ENCODE measurements at regions of chr12 and their contacts with region 1.

Region 1: DNA sequence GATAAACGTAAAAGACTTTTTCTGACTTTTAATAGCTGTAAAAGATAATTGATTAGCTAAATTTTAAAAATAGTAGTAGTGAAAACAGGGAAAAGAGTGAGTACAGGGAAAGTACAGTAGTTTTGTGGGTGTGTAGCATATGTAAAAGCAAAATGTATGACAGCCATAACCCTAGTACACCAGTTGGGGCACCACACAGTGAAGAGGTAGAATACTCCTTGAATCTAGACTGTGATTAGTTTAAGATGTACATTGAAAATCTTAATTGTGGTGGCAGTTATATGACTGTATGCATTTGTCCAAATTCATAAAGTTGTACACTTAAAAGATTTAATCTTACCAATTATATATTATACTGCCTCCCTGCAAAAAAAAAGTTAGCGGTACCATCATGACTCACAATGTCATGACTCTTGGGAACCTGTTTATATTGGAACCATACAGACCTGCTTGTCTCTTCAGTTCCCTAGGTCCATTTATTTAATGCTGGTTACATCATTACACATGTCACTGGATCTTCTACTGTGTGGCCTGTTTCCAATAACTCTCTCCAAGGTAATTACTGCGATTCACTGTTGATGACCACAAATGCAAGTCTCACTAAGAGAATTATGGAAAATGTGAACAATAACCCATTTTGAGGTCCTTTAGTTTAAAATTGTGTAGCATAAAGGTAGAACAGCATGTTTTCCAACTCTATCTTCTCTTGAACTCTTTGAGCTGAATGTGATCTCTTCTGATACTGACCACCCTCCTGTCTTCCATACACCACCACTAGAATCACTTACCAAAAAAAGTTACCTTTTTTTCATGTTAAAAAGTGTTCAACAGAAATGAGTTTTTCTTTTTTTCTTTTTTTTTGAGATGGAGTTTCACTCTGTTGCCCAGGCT is 264.2 kb upstream of the AMIGO2 start:
- DNase-seq: no peak
- H3K4me3 ChIP-seq: no peak overlapping the region
- H3K27ac ChIP-seq: no peak overlapping the region
- H3K4me1 ChIP-seq: no peaks in the 10 kb centered on the region
- H3K27me3 ChIP-seq: no peaks in the 10 kb centered on the region
- CTCF ChIP-seq: no peak
- EP300 ChIP-seq: no peak
- POLR2A ChIP-seq: no peak

Region 2: GRCh38 chr12:47328831-47329545 is 14.9 kb before region 1 on chr12:
- in situ Hi-C with region 1: no loop called
- intact Hi-C with region 1: loop called (anchors 1 kb)
- DNase-seq: no peak
- H3K4me3 ChIP-seq: no peak overlapping the region
- H3K27ac ChIP-seq: no peak overlapping the region
- H3K4me1 ChIP-seq: no peaks in the 10 kb centered on the region
- H3K27me3 ChIP-seq: no peaks in the 10 kb centered on the region
- CTCF ChIP-seq: no peak
- EP300 ChIP-seq: no peak
- POLR2A ChIP-seq: no peak